Head of caudate nucleus (tissue), 42 donors: ENCODE measurements at regions of chr20 and their contacts with region 1.

Region 1: DNA sequence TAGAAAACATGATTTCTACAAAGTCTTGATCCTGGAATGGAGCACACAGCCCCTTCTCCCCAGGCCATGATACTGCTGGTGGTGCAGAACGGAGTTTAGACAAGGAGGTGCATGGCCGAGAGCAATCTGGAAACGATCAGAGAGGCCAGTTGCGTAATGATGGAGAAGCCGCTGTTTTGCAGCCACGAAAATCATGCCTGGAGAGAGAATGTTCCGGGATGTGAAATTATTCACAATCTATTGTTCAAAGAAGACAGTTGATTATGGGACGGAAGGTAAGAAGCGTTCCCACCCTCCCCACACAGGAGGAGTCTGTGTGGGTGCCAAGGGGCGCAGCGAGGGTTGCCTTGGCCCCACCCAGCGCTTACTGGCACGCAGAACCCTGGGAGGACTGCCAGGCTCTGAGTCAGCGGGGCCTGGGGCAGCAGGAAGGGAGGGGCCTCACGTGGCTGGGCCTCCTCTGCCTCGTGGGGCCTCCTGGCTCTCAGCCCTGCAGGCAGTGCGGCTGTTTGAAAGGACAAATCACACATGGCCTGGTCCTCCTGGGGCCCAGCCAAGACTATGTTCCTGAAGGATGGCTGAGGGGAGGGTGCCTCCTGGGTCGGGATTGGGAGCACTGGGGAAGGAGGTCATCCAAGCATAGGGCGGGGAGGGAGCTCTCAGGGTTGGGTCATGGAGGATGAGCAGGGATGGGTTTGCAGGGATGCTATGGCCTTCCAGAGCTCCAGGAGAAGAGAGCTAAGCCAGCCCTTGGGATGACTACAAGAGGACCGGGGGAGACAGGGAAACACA is 8.7 kb upstream of the AP5S1 start:
- DNase-seq: peak; percentile 93 to 99 (median 98)

Region 2: DNA sequence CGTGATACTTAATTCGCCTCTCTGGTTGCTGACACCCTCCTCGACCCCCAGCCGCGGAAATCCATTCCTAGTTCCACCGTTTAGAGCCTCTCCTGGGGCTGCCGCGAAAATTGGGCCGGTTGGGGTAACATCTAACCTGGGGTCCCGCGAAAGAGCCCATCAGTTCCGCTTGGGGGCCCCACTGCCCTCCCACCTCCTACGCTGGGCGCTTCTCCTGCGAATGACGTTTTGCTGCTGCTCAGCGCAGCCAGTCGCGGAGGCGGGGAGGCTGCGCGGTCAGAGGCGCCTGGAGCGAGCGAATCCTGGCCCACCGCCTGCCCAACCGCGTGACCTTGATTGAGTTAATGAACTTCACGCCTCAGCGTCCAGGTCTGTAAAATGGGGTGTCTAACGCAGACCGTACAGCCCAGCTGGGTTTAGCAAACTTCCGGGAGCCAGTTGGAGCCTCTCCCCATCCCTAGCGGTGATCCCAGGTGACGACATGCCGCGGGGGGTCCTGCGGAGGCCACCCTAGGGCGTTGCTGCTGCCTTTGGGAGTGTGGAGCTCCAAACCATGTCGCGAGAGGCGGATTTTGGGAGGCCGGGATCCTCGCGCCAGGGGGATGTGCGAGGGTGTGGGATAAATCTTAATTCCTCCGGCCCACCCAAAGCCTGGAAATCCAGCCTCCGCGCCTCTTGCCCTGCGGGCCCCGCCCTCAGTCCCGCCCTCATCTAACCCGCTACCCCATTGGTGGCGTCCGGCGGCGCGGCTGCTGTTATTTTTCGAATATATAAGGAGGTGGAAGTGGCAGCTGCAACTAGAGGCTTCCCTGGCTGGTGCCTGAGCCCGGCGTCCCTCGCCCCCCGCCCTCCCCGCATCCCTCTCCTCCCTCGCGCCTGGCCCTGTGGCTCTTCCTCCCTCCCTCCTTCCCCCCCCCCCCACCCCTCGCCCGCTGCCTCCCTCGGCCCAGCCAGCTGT is 15.9 kb before region 1 on chr20 and contains the start of gene CDC25B:
- intact Hi-C with region 1: loop called (anchors 2 kb)
- DNase-seq: peak; percentile 93 to 98 (median 96)

Region 3: GRCh38 chr20:4038047-4038459 is 226.4 kb after region 1 on chr20:
- intact Hi-C with region 1: no loop called
- DNase-seq: peak in 16 of 42 donors; percentile 15 to 50 (median 22)